GM13976 (cell line): ENCODE measurements at regions of chr1 and their contacts with region 1.

Region 1: DNA sequence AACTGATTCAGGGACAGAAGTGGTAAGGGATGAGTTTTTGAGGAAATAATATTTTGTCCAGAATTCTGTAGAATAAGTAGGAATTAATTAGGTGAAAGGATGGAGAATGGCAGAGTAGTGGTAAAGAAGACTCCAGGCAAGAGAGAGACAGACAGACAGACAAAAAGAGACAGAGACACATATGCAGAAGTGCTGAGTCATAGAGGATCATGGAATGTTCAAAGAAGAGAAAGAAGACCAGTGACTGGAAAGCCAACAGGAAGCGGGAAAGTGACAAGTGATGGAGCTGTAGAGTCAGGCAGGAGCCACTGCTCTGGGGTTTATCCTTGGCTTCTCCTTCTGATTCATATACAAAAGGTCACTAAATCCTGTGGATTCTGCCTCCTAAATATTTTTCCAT is 85.9 kb downstream of the UROD start:
- DNase-seq: no peak
- CTCF ChIP-seq: no peak

Region 2: DNA sequence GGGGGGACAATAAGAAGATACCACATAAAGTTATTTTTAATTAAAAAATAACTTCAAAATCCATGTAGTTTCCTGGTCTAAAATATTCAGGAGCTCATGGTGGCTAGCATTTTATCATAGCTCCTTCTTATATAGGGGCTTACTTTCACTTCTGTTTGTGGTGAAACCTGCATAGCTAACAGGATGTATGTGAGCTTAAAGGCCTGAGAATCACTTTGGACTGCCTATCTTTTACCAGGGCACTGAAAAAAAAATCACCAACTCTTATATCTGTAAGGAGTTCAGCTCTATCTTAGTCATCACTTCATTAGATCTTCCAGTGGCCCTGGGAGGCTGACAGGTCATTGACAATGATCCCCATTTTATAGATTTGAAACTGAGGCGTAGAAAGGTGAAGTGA is 64.6 kb before region 1 on chr1:
- in situ Hi-C with region 1: loop called (anchors 10 kb)
- DNase-seq: peak; percentile 69
- CTCF ChIP-seq: no peak

Region 3: GRCh38 chr1:45230540-45230939 is 132.6 kb after region 1 on chr1:
- in situ Hi-C with region 1: no loop called
- DNase-seq: peak; percentile 23
- CTCF ChIP-seq: peak; percentile 7

Region 4: GRCh38 chr1:45621501-45621836 is 523.5 kb after region 1 on chr1:
- in situ Hi-C with region 1: no loop called
- DNase-seq: peak; percentile 41
- CTCF ChIP-seq: no peak